Natural killer cell (primary cell): ENCODE measurements at regions of chr3 and their contacts with region 1.

Region 1: DNA sequence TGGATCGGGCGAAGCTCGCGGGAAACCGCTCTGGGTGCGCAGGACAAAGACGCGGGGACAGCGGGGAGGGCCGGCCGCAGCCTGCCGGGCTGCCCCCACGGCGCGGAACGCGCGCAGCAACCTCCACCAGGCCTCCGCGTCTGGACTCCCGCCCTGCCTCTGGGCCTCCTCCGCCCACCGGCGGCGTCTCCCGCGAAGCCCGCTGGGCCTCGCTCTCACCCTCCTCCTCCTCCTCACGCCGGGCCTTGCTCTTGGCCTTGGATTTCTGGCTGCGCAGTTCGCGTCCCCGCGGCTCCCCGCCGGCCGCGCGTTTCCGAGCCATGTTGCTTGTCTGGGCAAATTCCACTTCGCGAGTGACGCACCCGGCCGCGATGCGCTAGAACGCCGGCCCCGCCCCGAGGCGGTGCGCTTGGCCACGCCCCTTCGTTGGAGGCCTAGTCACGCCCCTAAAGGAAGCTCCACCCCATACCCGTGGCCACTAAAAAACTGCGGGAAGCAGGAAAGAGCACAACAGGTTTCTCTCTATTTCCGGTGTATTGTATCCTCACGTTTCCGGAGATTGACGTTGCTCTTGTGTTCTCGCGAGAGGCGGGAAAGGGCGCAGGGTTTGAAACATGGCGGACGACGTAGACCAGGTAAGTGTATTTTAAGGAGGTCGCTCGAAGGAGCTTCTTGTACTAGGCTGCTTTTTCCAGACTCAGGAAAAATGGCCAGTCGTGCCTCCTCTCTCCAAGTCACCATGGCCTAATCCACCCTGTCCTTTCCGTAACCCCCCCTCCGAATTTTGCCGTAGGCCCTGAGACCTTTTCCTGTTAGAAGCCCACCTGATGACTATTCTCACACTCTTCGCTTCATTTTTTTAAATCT is at the starts of genes LSM3 and XPC:
- DNase-seq: peak; percentile 98 to 99
- ATAC-seq: peak; percentile 94 to 99 (median 94)
- H3K4me3 ChIP-seq: peak within 1 kb of the TSS; percentile 72
- H3K4me3 Mint-ChIP-seq: peak within 1 kb of the TSS; percentile 100
- H3K27ac ChIP-seq: peak within 1 kb of the TSS; percentile 91
- H3K27ac Mint-ChIP-seq: peak within 1 kb of the TSS; percentile 99 to 100
- H3K4me1 ChIP-seq: peaks cover 30% of the 10 kb centered on the region
- H3K4me1 Mint-ChIP-seq: peaks cover 61 to 66% of the 10 kb centered on the region in 2 donors
- H3K27me3 ChIP-seq: no peaks in the 10 kb centered on the region
- H3K27me3 Mint-ChIP-seq: no peaks in the 10 kb centered on the region
- CTCF ChIP-seq: no peak
- total RNA-seq, gene LSM3: 7.6 to 9.1 (median 8.9) TPM
- total RNA-seq, gene XPC: 45.5 to 62.1 (median 50.0) TPM

Region 2: GRCh38 chr3:14064910-14065309 is 113.6 kb before region 1 on chr3:
- intact Hi-C with region 1: no loop called
- DNase-seq: no peak
- ATAC-seq: no peak
- H3K4me3 ChIP-seq: no peak overlapping the region
- H3K4me3 Mint-ChIP-seq: no peak overlapping the region
- H3K27ac ChIP-seq: no peak overlapping the region
- H3K27ac Mint-ChIP-seq: no peak overlapping the region
- H3K4me1 ChIP-seq: no peaks in the 10 kb centered on the region
- H3K4me1 Mint-ChIP-seq: peaks cover 0 to 4% of the 10 kb centered on the region in 2 donors
- H3K27me3 ChIP-seq: no peaks in the 10 kb centered on the region
- H3K27me3 Mint-ChIP-seq: peaks cover 4 to 8% of the 10 kb centered on the region in 2 donors
- CTCF ChIP-seq: no peak

Region 3: GRCh38 chr3:14124615-14125190 is 53.8 kb before region 1 on chr3 and contains the starts of genes CHCHD4 and TMEM43:
- intact Hi-C with region 1: loop called (anchors 1 kb)
- DNase-seq: peak; percentile 97 to 100
- ATAC-seq: peak; percentile 89 to 97 (median 90)
- H3K4me3 ChIP-seq: peak within 1 kb of the TSS; percentile 97
- H3K4me3 Mint-ChIP-seq: peak within 1 kb of the TSS; percentile 96
- H3K27ac ChIP-seq: peak within 1 kb of the TSS; percentile 91
- H3K27ac Mint-ChIP-seq: peak within 1 kb of the TSS; percentile 92 to 93
- H3K4me1 ChIP-seq: peaks cover 39% of the 10 kb centered on the region
- H3K4me1 Mint-ChIP-seq: peaks cover 50 to 55% of the 10 kb centered on the region in 2 donors
- H3K27me3 ChIP-seq: no peaks in the 10 kb centered on the region
- H3K27me3 Mint-ChIP-seq: no peaks in the 10 kb centered on the region
- CTCF ChIP-seq: no peak
- total RNA-seq, gene CHCHD4: 2.1 to 4.3 (median 3.4) TPM
- total RNA-seq, gene TMEM43: 49.5 to 61.1 (median 54.1) TPM

Region 4: GRCh38 chr3:14216257-14217048 is 38.0 kb after region 1 on chr3:
- intact Hi-C with region 1: loop called (anchors 1 kb)
- DNase-seq: peak; percentile 47 to 65
- ATAC-seq: peak in 2 of 3 donors; percentile 67 to 96
- H3K4me3 ChIP-seq: no peak overlapping the region
- H3K4me3 Mint-ChIP-seq: peak overlapping the region; percentile 49
- H3K27ac ChIP-seq: no peak overlapping the region
- H3K27ac Mint-ChIP-seq: peak overlapping the region in 1 of 2 donors; percentile 88
- H3K4me1 ChIP-seq: no peaks in the 10 kb centered on the region
- H3K4me1 Mint-ChIP-seq: peaks cover 0 to 15% of the 10 kb centered on the region in 2 donors
- H3K27me3 ChIP-seq: no peaks in the 10 kb centered on the region
- H3K27me3 Mint-ChIP-seq: peaks cover 8 to 9% of the 10 kb centered on the region in 2 donors
- CTCF ChIP-seq: peak; percentile 61

Region 5: DNA sequence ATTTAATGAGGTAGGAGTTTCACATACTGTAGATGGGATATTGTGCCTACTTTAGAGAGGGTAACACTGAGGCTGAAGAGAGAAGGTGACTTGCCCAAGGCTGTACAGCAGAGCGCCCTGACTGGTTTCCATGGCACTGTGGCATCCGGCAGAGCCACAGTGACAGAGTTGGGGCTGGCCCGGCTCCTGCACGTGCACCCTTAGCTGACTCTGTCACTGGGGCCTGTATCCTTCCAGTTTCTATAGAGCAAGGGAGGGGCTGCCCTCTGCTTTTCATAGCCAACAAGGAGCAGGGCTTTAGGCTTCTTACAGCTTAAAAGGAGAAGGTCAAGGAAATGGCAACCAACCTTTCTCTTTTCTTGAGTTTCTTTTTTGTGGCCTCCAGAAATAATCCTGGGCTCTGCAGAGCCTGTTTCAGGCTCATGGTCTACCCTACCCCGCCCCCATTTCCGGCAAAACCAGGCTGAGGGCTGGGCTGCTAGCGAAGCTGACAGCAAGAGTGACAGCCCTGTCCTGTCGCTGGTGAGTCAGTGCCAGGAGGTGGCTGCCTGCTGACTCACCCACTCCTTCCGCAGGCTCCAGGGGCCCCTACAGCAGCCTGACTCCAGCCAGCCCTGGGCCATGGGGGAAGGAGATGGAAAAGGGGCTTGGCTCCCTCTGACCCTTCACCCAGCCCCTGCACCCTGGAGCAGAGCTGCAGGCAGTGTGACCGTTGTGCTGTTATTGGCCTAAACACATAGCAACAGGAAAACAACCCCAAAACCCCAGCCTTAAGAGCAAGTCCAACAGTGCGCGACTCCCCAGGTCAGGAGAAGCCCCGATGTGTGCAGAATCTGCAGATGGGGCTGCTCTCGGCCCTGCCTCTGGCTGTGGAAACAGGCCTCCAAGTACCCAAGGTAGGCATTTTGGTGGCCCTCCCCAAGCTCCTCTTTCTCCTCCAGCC is 253.7 kb after region 1 on chr3:
- intact Hi-C with region 1: loop called (anchors 2 kb)
- DNase-seq: peak; percentile 91 to 96
- ATAC-seq: peak; percentile 75 to 93 (median 85)
- H3K4me3 ChIP-seq: peak overlapping the region; percentile 15
- H3K4me3 Mint-ChIP-seq: peak overlapping the region; percentile 73
- H3K27ac ChIP-seq: peak overlapping the region; percentile 97
- H3K27ac Mint-ChIP-seq: peak overlapping the region; percentile 96 to 97
- H3K4me1 ChIP-seq: peaks cover 96% of the 10 kb centered on the region
- H3K4me1 Mint-ChIP-seq: peaks cover 76 to 85% of the 10 kb centered on the region in 2 donors
- H3K27me3 ChIP-seq: no peaks in the 10 kb centered on the region
- H3K27me3 Mint-ChIP-seq: no peaks in the 10 kb centered on the region
- CTCF ChIP-seq: no peak

Region 6: DNA sequence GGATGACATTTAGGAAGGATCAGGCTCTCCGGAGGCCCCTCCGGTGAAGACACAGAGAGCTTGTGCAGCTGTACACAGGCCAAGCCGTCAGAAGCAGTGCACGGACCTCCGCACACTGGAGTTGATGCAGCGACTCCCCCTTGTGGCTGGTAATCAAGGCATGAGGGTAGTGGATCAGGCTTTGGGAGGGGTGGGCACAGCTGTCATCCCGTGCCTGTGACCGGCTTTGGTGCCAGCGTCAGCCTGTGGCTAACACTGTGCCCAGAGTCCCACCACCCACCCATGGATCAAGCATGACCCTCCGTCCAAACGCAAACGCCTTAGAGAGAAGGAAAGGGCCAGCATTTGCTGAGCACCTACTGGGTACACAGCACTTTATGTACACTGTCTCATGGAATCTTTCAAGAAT is 369.8 kb after region 1 on chr3:
- intact Hi-C with region 1: no loop called
- DNase-seq: peak in 1 of 2 donors; percentile 59
- ATAC-seq: peak in 1 of 3 donors; percentile 62
- H3K4me3 ChIP-seq: no peak overlapping the region
- H3K4me3 Mint-ChIP-seq: no peak overlapping the region
- H3K27ac ChIP-seq: no peak overlapping the region
- H3K27ac Mint-ChIP-seq: no peak overlapping the region
- H3K4me1 ChIP-seq: no peaks in the 10 kb centered on the region
- H3K4me1 Mint-ChIP-seq: no peaks in the 10 kb centered on the region
- H3K27me3 ChIP-seq: peaks cover 3% of the 10 kb centered on the region
- H3K27me3 Mint-ChIP-seq: peaks cover 32 to 60% of the 10 kb centered on the region in 2 donors
- CTCF ChIP-seq: no peak

Region 7: DNA sequence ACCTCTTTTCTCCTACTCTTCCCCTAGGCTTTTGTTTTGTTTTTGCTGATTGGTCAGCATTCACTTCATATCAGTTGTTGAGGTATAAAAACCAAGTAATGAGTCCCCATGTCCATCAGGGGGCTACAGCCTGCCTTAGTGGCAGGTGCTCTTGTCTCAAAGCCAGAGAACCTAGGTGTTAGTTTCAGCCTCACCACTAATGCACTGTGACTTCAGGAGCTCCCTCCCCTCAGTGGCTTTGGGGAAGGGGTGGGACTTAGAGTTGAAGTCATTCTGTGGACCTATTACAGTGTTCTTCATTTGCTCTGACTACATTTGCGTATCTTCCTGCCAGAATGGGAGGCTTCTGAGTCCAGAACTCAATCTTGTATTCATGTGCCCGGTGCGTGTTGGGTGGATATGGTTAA is 810.5 kb after region 1 on chr3:
- intact Hi-C with region 1: no loop called
- DNase-seq: peak; percentile 26 to 41
- ATAC-seq: peak; percentile 92 to 99 (median 98)
- H3K4me3 ChIP-seq: no peak overlapping the region
- H3K4me3 Mint-ChIP-seq: no peak overlapping the region
- H3K27ac ChIP-seq: no peak overlapping the region
- H3K27ac Mint-ChIP-seq: peak overlapping the region; percentile 25 to 56
- H3K4me1 ChIP-seq: peaks cover 6% of the 10 kb centered on the region
- H3K4me1 Mint-ChIP-seq: peaks cover 47 to 55% of the 10 kb centered on the region in 2 donors
- H3K27me3 ChIP-seq: no peaks in the 10 kb centered on the region
- H3K27me3 Mint-ChIP-seq: no peaks in the 10 kb centered on the region
- CTCF ChIP-seq: no peak